ENCODE measurements at regions of chr9 and their contacts with region 1.

Region 1: GRCh38 chr9:72864327-72864726 is 88.5 kb downstream of the ALDH1A1 start:
- ATAC-seq: peak in 1 of 8 experiments; percentile 28
- H3K4me3 ChIP-seq: no peak overlapping the region
- H3K27ac ChIP-seq: no peak overlapping the region
- H3K4me1 ChIP-seq: no peaks in the 10 kb centered on the region

Region 2: DNA sequence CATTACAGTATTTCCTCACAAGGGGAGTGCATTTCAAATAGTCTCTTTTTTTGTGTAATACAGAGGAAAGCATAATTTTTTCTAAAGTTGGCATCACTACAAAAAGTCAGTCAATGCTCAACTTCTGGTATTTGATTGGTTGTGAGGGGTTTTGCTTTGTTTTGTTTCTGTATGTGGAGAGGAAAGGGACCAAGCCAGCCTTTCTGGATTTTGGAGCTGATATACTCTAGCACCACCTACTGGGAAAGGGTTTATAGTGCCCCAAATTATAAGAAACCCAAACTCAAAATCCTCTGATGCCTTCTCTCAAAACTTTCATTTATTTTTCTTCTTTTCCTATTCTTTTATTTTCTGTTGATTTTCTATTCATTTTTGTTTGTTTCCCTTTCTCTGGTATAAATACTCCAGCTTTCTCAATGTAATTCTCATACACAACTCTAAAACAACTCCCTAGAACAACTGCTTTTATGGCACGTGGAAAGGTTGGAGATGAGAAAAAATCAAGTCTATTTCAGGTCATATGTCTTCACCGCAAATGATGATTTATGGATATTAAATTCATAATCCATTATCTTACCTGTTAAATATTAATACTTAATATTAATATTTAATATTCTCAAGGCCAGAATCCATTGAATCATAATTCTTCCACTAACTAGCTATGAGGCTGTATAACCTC is 217.8 kb after region 1 on chr9:
- in situ Hi-C with region 1: loop called in 1 of 9 experiments (anchors 10 kb)
- ATAC-seq: peak in 3 of 8 experiments; percentile 50 to 60 (median 60)
- H3K4me3 ChIP-seq: no peak overlapping the region
- H3K27ac ChIP-seq: no peak overlapping the region
- H3K4me1 ChIP-seq: no peaks in the 10 kb centered on the region

Measured in motor neuron (in vitro differentiated cells).